CD14-positive monocyte (primary cell): ENCODE measurements at regions of chr9 and their contacts with region 1.

Region 1: GRCh38 chr9:134660407-134660806 is 18.8 kb downstream of the COL5A1 start:
- DNase-seq: no peak
- H3K4me3 ChIP-seq: no peak overlapping the region
- H3K4me3 Mint-ChIP-seq: no peak overlapping the region
- H3K27ac ChIP-seq: no peak overlapping the region
- H3K27ac Mint-ChIP-seq: no peak overlapping the region
- H3K4me1 ChIP-seq: no peaks in the 10 kb centered on the region
- H3K4me1 Mint-ChIP-seq: no peaks in the 10 kb centered on the region
- H3K27me3 ChIP-seq: no peaks in the 10 kb centered on the region
- H3K27me3 Mint-ChIP-seq: peaks cover 0 to 2% (median 2%) of the 10 kb centered on the region in 3 donors
- CTCF ChIP-seq: peak; percentile 63

Region 2: DNA sequence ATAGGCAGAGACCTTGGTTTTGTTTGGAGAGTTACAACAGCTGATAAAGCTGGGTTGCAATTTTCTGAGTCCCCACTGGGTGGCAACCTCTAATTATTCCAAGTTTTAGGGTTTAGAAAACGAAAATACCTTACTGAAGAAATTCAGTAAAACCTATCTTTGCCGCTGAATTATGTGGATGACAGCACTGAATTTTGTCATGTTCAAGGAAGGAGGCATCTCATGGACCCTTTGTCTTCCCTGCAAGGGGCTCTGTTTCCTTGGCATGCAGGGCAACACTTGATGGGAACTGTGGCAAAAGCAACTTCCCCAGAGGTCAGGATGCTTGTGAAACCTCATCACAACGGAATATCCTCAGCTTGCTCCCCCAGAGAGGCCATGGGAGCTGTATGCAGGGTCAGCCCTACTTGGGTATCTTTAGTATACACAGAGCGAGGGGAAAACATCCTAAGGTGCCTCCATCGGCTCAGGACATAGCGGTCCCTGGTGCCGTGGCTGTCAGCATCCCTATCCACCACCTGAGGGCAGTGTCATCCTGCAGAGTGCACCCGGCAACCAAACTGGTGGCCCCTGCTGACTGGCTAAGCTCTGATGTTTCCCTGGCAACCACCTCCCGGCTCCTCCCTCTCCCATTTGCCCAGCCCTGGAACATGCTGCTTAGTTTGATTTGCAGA is 211.0 kb before region 1 on chr9:
- intact Hi-C with region 1: loop called in 1 of 2 experiments (anchors 10 kb)
- DNase-seq: peak; percentile 89 to 90 (median 90)
- H3K4me3 ChIP-seq: no peak overlapping the region
- H3K4me3 Mint-ChIP-seq: no peak overlapping the region
- H3K27ac ChIP-seq: no peak overlapping the region
- H3K27ac Mint-ChIP-seq: peak overlapping the region in 1 of 7 donors; percentile 75
- H3K4me1 ChIP-seq: no peaks in the 10 kb centered on the region
- H3K4me1 Mint-ChIP-seq: peaks cover 8% of the 10 kb centered on the region
- H3K27me3 ChIP-seq: no peaks in the 10 kb centered on the region
- H3K27me3 Mint-ChIP-seq: peaks cover 2 to 12% (median 4%) of the 10 kb centered on the region in 3 donors
- CTCF ChIP-seq: peak; percentile 80

Region 3: DNA sequence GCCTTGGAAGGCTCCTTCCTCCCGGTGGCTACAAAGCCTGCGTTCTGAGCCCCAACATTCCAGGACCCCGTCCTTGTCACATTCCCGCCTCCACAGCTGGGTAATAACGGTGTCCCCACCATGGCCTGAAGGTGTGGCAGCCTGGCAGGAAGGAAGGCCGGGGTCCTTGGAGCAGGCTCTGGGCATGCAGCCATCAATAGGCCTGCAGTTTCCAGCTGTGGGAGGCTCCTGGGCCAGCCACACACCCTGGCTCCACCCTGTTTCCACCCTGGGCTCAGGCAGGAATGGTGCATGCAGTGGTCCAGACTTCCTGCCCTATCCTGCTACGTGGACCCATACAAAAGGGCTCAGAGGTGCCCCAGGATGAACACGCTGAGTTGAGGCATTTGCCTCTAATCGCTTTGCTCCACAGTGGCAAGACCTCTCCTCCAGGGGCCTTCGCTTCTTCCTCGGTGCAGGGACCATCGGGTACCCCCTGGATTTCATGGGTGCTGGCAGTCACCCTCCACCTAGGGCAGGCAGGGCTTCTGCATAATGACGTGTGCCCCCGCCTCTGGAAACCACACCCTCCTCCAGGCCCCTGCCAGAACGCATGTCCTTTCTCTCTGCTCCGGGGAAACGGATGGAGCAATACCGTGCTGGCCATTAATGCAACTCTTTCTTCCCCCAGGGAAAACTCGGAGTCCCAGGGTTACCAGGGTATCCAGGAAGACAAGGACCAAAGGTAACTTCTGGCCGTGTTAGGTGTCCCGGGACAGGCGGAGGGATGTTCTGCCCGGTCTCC is 125.1 kb after region 1 on chr9:
- intact Hi-C with region 1: no loop called
- DNase-seq: no peak
- H3K4me3 ChIP-seq: no peak overlapping the region
- H3K4me3 Mint-ChIP-seq: no peak overlapping the region
- H3K27ac ChIP-seq: no peak overlapping the region
- H3K27ac Mint-ChIP-seq: no peak overlapping the region
- H3K4me1 ChIP-seq: no peaks in the 10 kb centered on the region
- H3K4me1 Mint-ChIP-seq: no peaks in the 10 kb centered on the region
- H3K27me3 ChIP-seq: peaks cover 0 to 10% of the 10 kb centered on the region in 2 donors
- H3K27me3 Mint-ChIP-seq: peaks cover 14 to 33% (median 18%) of the 10 kb centered on the region in 3 donors
- CTCF ChIP-seq: no peak